ENCODE measurements at regions of chr12 and their contacts with region 1.

Region 1: DNA sequence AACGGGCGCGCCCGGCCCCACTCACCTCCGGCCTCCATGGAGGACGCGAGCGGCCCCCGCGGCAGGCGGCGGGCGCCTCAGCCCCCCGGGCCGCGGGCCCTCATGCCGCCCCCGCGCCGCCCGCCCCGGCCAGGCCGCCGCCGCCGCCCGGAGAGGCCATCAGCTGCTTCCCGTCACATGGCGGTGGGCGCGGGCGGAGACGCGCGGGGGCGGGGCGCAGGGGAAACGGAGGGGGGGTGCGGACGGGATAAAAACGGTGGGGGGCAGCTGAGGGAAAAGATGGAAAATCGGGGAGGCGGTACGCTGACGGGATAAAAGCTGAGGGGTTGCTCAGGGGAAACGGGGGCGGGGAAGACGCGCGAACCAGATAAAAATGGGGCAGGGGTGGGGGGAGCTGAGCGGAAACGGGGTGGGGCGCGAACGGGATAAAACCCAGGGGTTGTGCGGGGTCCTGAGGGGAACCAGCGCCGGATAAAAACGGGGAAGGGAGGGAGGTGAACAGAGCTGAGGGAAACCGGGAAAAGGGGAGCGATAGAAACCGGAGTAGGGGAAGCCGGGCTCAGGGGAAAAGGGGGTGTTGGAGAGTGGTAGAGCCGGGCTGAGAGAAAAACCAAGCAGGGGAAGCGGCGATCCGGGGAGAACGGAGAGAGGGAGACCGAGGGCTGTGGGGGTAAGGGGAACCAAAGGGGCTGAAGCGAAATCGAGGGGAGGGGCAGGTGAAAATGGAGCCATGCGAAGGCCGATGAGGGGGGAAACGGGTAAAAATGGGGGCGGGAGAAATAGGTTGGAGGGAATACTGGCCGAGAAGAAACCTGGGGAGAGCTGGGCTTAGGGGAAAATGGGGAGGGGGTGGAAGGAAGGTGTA is at the start of gene WSB2:
- DNase-seq: peak; percentile 5 to 69 (median 50)
- ATAC-seq: peak; percentile 43
- H3K4me3 ChIP-seq: peak within 1 kb of the TSS; percentile 72 to 86
- H3K4me3 Mint-ChIP-seq: peak within 1 kb of the TSS; percentile 93
- H3K27ac ChIP-seq: peak within 1 kb of the TSS; percentile 67 to 92
- H3K27ac Mint-ChIP-seq: peak within 1 kb of the TSS; percentile 98
- H3K4me1 ChIP-seq: peaks cover 40% of the 10 kb centered on the region
- H3K4me1 Mint-ChIP-seq: peaks cover 57% of the 10 kb centered on the region
- H3K27me3 ChIP-seq: peaks cover 0 to 2% of the 10 kb centered on the region in 2 experiments
- H3K27me3 Mint-ChIP-seq: no peaks in the 10 kb centered on the region
- CTCF ChIP-seq: no peak
- total RNA-seq, gene WSB2: 16.4 to 19.5 TPM

Region 2: GRCh38 chr12:117596968-117597367 is 464.3 kb before region 1 on chr12:
- CTCF ChIA-PET with region 1: no interaction called
- POLR2A ChIA-PET with region 1: no interaction called
- intact Hi-C with region 1: no loop called
- DNase-seq: no peak
- ATAC-seq: no peak
- H3K4me3 ChIP-seq: no peak overlapping the region
- H3K4me3 Mint-ChIP-seq: no peak overlapping the region
- H3K27ac ChIP-seq: no peak overlapping the region
- H3K27ac Mint-ChIP-seq: no peak overlapping the region
- H3K4me1 ChIP-seq: no peaks in the 10 kb centered on the region
- H3K4me1 Mint-ChIP-seq: no peaks in the 10 kb centered on the region
- H3K27me3 ChIP-seq: no peaks in the 10 kb centered on the region
- H3K27me3 Mint-ChIP-seq: peaks cover 2% of the 10 kb centered on the region
- CTCF ChIP-seq: no peak

Region 3: DNA sequence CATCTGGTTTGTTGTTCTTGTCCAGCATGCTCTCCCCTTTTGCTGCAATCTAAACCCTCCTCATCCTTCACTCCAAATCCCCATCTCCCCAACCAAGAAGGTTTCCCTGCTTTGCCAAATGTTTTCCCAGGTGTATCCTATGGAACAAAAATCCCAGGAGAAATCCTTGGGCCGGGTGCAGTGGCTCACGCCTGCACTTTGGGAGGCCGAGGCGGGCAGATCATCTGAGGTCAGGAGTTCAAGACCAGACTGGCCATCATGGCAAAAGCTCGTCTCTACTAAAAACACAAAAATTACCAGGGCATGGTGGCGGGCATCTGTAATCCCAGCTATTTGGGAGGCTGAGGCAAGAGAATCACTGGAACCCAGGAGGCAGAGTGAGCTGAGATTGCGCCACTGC is 97.4 kb before region 1 on chr12:
- CTCF ChIA-PET with region 1: no interaction called
- POLR2A ChIA-PET with region 1: no interaction called
- intact Hi-C with region 1: no loop called
- DNase-seq: no peak
- ATAC-seq: no peak
- H3K4me3 ChIP-seq: no peak overlapping the region
- H3K4me3 Mint-ChIP-seq: no peak overlapping the region
- H3K27ac ChIP-seq: no peak overlapping the region
- H3K27ac Mint-ChIP-seq: no peak overlapping the region
- H3K4me1 ChIP-seq: peaks cover 3% of the 10 kb centered on the region
- H3K4me1 Mint-ChIP-seq: peaks cover 4% of the 10 kb centered on the region
- H3K27me3 ChIP-seq: peaks cover 0 to 6% of the 10 kb centered on the region in 2 experiments
- H3K27me3 Mint-ChIP-seq: peaks cover 53% of the 10 kb centered on the region
- CTCF ChIP-seq: no peak

Region 4: GRCh38 chr12:118016424-118017264 is 44.6 kb before region 1 on chr12 and contains the start of gene RFC5:
- CTCF ChIA-PET with region 1: interaction called, 3 read pairs
- POLR2A ChIA-PET with region 1: interaction called, 6 read pairs
- intact Hi-C with region 1: loop called (anchors 1 to 2 kb)
- DNase-seq: peak; percentile 94 to 99 (median 98)
- ATAC-seq: peak; percentile 97
- H3K4me3 ChIP-seq: peak within 1 kb of the TSS; percentile 88 to 98
- H3K4me3 Mint-ChIP-seq: peak within 1 kb of the TSS; percentile 90
- H3K27ac ChIP-seq: peak within 1 kb of the TSS in 1 of 2 experiments; percentile 58
- H3K27ac Mint-ChIP-seq: peak within 1 kb of the TSS; percentile 90
- H3K4me1 ChIP-seq: peaks cover 19% of the 10 kb centered on the region
- H3K4me1 Mint-ChIP-seq: peaks cover 18% of the 10 kb centered on the region
- H3K27me3 ChIP-seq: no peaks in the 10 kb centered on the region
- H3K27me3 Mint-ChIP-seq: no peaks in the 10 kb centered on the region
- CTCF ChIP-seq: no peak
- total RNA-seq, gene RFC5: 9.9 to 13.8 TPM

Region 5: GRCh38 chr12:118448341-118448740 is 387.1 kb after region 1 on chr12:
- CTCF ChIA-PET with region 1: no interaction called
- POLR2A ChIA-PET with region 1: no interaction called
- intact Hi-C with region 1: no loop called
- DNase-seq: no peak
- ATAC-seq: no peak
- H3K4me3 ChIP-seq: no peak overlapping the region
- H3K4me3 Mint-ChIP-seq: no peak overlapping the region
- H3K27ac ChIP-seq: no peak overlapping the region
- H3K27ac Mint-ChIP-seq: no peak overlapping the region
- H3K4me1 ChIP-seq: no peaks in the 10 kb centered on the region
- H3K4me1 Mint-ChIP-seq: no peaks in the 10 kb centered on the region
- H3K27me3 ChIP-seq: no peaks in the 10 kb centered on the region
- H3K27me3 Mint-ChIP-seq: peaks cover 20% of the 10 kb centered on the region
- CTCF ChIP-seq: no peak

Region 6: GRCh38 chr12:119082496-119082895 is 1021.3 kb after region 1 on chr12:
- CTCF ChIA-PET with region 1: no interaction called
- POLR2A ChIA-PET with region 1: no interaction called
- intact Hi-C with region 1: no loop called
- DNase-seq: no peak
- ATAC-seq: no peak
- H3K4me3 ChIP-seq: no peak overlapping the region
- H3K4me3 Mint-ChIP-seq: no peak overlapping the region
- H3K27ac ChIP-seq: no peak overlapping the region
- H3K27ac Mint-ChIP-seq: no peak overlapping the region
- H3K4me1 ChIP-seq: no peaks in the 10 kb centered on the region
- H3K4me1 Mint-ChIP-seq: no peaks in the 10 kb centered on the region
- H3K27me3 ChIP-seq: no peaks in the 10 kb centered on the region
- H3K27me3 Mint-ChIP-seq: peaks cover 4% of the 10 kb centered on the region
- CTCF ChIP-seq: no peak